ENCODE measurements at regions of chr4 and their contacts with region 1.

Region 1: DNA sequence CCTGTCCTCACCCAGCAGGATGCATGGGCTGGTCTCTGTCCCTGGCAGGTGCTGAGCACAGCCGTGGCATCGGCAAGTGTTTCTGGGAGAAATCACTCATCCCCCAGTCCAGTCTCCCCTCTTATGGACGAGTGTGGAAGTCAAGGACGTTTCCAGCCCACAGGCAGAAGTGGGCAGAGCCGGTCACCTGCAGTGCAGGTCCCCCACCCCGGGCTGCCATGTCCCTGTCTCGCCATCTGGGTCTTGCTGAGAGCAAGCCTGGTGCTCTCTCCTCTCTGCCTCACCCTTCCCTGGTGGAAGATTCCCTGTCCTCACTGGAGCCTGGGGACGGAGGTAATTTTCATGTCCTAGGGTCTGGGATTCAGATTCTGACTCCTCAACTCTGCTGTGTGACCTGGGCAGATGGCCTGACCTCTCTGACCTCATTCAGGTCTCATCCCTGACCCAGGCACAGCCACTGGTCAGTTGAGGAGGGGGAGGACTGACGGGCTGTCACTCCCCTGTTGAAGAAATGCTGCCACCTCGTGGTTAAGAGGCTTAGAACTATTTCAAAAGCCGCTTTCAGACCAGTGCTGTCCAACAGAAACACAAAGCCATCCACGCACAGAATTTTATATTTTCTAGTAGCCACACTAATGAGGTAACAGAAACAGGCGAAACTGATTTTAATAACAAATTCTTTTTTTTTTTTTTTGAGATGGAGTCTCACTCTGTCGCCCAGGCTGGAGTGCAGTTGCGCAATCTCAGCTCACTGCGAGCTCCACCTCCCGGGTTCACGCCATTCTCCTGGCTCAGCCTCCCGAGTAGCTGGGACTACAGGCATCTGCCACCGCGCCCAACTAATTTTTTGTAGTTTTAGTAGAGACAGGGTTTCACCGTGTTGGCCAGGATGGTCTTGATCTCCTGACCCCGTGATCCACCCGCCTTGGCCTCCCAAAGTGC is 1.8 kb downstream of the CPZ start:
- DNase-seq: peak; percentile 43
- ATAC-seq: peak; percentile 67 to 75

Region 2: DNA sequence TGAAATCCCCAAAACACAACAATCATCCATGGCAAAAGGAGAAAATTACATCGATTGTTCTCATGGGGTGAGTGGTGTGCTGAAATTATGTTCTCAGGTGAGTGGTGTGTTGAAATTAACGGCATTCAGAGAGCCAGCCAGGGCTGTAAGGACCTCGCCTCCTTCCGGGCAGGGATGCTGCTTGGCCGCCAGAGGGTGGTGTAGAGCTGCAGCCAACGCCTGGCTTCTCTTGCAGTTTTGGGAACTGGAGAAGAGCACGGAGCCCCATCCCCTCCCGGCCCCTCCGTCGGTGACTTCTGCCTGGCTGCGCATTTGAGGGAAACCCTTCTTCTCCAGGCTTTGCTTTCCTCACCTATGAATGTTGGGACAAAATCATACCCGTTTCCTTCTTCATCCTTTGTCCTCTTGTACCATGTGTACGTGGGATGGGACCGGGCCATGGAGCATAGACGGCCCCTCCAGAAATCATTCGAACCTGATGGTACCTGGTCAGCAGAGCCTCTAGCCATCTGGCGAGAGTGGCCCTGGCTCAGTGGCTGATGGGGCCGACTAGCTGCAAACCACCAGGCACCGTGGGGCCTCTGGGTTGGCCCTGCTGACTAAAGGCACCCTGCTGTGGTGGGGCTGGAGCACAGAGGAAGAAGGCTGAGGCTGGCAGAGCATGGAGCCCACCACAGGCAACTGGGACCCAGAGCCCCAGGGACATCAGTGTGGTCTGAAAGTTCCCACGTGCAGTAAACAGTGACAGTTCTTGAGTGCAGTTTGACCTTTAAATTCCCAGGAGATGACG is 125.4 kb before region 1 on chr4:
- intact Hi-C with region 1: loop called (anchors 2 to 5 kb)
- DNase-seq: peak; percentile 63
- ATAC-seq: peak; percentile 26 to 60

Measured in left cardiac atrium (tissue), 4 donors.